ENCODE measurements at regions of chr9 and their contacts with region 1.

Region 1: DNA sequence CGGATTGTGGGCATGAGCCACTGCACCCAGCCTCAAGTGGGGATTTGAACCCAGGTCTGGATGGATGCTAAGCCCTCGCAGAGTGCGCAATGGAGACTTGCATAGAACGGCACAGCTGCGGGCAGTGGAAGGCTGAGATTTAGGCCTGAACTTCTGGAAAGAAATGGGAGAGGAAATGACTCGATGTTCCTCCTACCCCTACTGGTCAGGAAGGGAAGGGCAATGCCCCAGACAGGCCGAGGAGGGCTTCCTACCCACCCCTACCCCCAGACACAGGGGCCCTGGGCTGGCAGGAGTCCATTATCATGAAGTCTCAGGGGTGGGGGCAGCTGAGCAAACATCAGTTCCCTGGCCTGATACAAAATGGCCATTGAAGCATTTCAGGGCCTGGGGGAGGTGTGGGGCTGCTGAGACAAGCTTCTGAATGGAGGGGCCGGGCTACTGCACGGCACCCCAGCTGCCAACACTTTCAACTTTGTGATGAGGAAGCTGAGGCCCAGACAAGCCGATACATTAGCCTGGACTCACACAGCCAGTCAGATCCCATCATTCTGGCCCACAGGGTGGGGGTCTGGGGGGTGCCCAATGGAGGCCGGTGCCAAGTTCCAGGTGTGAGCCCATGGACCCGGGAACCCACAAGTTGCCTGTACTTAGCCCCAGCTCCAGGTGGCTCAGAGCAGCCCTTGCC is 13.5 kb upstream of the WDR38 start:
- DNase-seq: peak; percentile 74
- ATAC-seq: peak; percentile 90
- H3K4me3 Mint-ChIP-seq: no peak overlapping the region
- H3K27ac Mint-ChIP-seq: peak overlapping the region; percentile 51
- H3K4me1 Mint-ChIP-seq: peaks cover 3% of the 10 kb centered on the region; the same call in 1 of the 2 replicates
- H3K27me3 Mint-ChIP-seq: no peaks in the 10 kb centered on the region
- CTCF ChIP-seq: peak; percentile 70

Region 2: DNA sequence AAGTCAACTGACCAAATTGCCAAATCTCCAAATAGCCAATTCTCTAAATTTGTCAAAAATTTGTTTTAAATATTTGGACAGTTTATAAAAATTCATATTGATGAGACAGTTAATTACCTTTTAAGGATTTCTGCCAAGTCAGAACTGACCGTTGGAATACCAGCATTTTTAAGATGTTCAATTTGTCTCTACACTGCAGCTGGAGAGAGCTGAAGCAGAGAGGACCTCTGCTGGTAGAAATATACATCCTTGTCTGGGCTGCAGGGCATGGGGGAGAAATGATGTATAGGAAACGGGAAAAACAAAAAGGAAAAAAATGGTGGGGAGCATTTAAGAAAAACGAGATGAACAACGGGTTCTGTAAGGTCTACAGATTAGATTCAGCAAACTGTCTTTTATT is 85.5 kb before region 1 on chr9:
- CTCF ChIA-PET with region 1: no interaction called
- POLR2A ChIA-PET with region 1: no interaction called
- DNase-seq: no peak
- ATAC-seq: peak; percentile 34; the same call in 1 of the 2 replicates
- H3K4me3 Mint-ChIP-seq: peak overlapping the region; percentile 27
- H3K27ac Mint-ChIP-seq: no peak overlapping the region
- H3K4me1 Mint-ChIP-seq: peaks cover 84% of the 10 kb centered on the region
- H3K27me3 Mint-ChIP-seq: no peaks in the 10 kb centered on the region
- CTCF ChIP-seq: no peak

Region 3: DNA sequence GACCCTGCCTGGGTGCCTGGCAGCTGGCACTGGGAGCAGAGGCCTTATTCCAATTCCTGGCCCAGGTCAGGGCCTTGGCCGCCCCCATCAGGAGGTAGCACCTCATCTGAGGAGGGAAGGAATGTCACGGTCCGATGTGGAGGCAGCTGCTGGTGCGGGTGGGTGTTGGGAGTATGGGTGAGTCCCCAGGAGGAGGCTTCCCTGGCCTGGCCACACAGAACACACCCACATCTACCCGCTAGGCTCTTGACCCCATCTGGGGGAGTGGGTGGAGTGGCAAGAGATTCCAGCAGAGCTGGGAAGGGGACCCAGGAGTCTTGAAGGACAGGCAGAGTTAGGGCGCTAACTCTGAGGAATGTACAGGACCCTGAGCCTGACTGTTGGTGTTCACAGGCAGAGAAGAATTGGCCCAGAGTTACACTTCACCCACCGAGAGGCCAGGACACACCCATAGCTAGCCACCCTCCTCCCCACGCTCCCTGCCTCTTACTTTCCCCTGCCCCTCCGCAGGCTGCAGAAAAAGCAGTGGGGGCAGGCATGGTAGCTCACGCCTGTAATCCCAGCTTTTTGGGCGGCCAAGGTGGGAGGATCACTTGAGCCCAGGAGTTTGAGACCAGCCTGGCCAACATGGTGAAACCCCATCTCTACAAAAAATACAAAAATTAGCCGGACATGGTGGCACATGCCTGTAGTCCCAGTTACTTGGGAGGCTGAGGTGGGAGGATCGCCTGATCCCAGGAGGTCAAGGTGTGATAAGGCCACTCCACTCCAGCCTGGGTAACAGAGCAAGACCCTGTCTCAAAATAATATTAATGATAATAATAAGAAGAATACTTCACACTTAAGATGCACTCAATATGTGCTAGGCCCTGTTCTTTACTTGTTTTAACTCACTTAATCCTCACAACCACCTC is 56.8 kb before region 1 on chr9:
- CTCF ChIA-PET with region 1: interaction called, 323 read pairs
- POLR2A ChIA-PET with region 1: interaction called, 4 read pairs
- DNase-seq: peak; percentile 14
- ATAC-seq: peak; percentile 8
- H3K4me3 Mint-ChIP-seq: no peak overlapping the region
- H3K27ac Mint-ChIP-seq: no peak overlapping the region
- H3K4me1 Mint-ChIP-seq: peaks cover 18% of the 10 kb centered on the region
- H3K27me3 Mint-ChIP-seq: peaks cover 7% of the 10 kb centered on the region
- CTCF ChIP-seq: no peak

Region 4: DNA sequence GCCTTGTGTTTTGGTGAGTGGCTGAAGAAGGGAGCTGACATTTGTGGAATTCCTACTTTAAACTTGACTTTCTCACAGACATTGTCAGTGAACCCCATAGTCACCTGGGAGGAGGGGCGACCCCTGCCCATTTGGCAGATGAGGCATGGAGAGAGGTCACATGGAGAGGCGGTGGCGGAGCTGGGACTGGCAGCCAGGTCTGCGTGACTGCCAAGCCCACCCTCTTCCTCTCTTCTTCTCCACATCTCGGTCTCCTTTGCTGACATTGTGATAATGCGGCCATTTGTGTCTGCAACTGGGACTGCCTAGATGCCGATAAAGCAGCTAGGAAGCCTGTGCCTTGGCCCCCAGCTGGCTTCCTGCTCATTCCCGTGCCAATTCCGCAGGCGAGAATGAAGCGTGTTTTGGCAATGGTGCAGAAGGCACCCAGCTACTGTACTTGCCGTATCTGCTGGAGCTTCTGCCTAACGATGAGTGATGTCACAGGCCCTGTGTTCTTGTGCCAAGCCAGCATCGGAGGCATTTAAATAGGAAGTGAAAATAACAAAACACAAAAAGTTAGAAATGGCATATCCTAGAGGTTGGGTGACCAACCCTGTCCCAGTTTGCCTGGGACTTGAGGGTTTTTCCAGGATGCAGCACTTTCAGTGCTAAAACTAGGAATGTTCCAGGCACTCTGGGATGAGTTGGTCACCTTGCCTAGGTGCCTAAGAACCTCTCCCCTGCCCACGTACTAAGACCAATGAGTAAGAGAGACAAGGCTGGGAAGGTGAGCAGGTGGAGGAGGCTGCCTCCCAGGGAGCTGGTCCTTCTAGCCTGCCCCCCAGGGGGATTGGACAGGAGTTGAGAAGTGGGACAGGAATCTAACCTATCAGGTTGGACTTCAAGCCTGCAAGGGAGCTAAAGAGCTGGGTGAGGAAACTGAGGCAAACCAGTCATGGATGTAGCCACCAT is 39.2 kb before region 1 on chr9:
- CTCF ChIA-PET with region 1: interaction called, 19 read pairs
- POLR2A ChIA-PET with region 1: interaction called, 6 read pairs
- DNase-seq: no peak
- ATAC-seq: no peak
- H3K4me3 Mint-ChIP-seq: no peak overlapping the region
- H3K27ac Mint-ChIP-seq: peak overlapping the region; percentile 60; the same call in 1 of the 2 replicates
- H3K4me1 Mint-ChIP-seq: 0 out of 2 replicates have a peak, but pooled peaks cover 4% of the 10 kb centered on the region
- H3K27me3 Mint-ChIP-seq: no peaks in the 10 kb centered on the region
- CTCF ChIP-seq: no peak

Region 5: DNA sequence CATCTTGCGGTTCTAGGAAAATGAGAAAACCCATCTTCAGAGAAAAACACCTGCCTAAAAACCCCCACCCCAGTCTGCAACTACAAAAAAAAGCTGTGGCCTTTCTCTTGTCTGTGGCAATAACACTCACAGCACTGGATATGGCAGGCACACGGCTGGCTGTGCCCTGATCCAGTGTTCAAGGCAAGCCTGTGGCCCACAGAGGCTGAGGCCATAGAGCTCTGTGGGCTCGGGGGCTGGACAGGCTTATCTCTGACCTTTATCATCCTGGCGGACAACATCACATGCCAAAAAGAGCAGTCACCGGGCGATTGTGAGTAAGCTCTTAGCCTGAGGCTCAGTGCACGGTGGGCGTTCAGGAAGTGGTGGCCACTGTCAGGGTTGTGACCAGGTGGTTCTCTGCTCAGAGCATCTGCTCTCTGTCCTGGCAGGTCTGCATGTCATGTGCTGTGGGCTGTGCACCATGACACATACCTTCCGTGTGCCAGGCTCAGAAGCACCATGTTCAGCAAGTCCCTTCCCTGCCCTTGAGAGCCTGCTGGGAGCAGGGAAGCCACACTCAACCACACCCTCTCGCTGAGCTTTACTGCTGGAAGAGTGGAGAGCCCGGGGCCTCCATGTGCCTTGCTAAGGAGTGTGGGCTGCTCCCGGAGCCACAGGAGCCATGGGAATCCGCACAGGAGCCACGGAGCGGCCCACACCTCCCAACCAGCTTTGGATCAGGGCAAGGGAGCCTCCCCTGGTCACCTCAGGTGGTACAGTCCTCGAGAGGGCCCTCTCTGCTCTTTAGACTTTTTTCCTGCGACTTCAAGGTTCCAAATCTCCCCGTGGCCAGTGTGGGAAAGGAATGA is 21.1 kb before region 1 on chr9:
- CTCF ChIA-PET with region 1: interaction called, 36 read pairs
- POLR2A ChIA-PET with region 1: no interaction called
- DNase-seq: peak; percentile 57
- ATAC-seq: peak; percentile 91
- H3K4me3 Mint-ChIP-seq: no peak overlapping the region
- H3K27ac Mint-ChIP-seq: no peak overlapping the region
- H3K4me1 Mint-ChIP-seq: peaks cover 12% of the 10 kb centered on the region
- H3K27me3 Mint-ChIP-seq: no peaks in the 10 kb centered on the region
- CTCF ChIP-seq: no peak

Region 6: DNA sequence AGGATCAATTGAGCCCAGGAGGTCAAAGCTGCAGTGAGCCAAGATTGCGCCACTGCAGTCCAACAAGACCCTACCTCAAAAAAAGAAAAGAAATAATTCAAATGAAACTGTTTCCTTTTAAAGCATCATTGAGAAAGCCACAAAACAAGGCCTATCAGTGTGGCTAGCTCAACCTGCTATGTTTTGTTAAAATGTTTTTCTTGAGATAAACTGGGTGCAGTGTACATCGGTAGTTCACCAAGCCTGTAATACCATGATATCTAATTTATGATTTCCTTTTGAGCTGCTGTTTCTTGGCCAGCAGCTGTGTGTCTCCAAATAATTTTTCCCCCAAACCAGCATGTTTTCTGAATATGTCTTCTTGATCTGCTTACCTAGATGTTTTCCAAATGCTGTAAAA is 198.4 kb after region 1 on chr9:
- CTCF ChIA-PET with region 1: no interaction called
- POLR2A ChIA-PET with region 1: no interaction called
- DNase-seq: no peak
- ATAC-seq: no peak
- H3K4me3 Mint-ChIP-seq: no peak overlapping the region
- H3K27ac Mint-ChIP-seq: peak overlapping the region; percentile 42; the same call in 1 of the 2 replicates
- H3K4me1 Mint-ChIP-seq: no peaks in the 10 kb centered on the region
- H3K27me3 Mint-ChIP-seq: no peaks in the 10 kb centered on the region
- CTCF ChIP-seq: no peak

Measured in WTC11 (cell line).